Endothelial cell of umbilical vein (primary cell): ENCODE measurements at regions of chr9 and their contacts with region 1.

Region 1: GRCh38 chr9:122931226-122932121 is at the start of gene ZBTB26:
- DNase-seq: peak; percentile 95
- H3K4me3 ChIP-seq: peak within 1 kb of the TSS; percentile 64 to 100 (median 70)
- H3K27ac ChIP-seq: peak within 1 kb of the TSS; percentile 87
- H3K4me1 ChIP-seq: peaks cover 15% of the 10 kb centered on the region
- H3K27me3 ChIP-seq: no peaks in the 10 kb centered on the region
- CTCF ChIP-seq: no peak
- POLR2A ChIP-seq: peak; percentile 90
- total RNA-seq, gene ZBTB26: 4.8 and 5.0 TPM in 2 replicates

Region 2: DNA sequence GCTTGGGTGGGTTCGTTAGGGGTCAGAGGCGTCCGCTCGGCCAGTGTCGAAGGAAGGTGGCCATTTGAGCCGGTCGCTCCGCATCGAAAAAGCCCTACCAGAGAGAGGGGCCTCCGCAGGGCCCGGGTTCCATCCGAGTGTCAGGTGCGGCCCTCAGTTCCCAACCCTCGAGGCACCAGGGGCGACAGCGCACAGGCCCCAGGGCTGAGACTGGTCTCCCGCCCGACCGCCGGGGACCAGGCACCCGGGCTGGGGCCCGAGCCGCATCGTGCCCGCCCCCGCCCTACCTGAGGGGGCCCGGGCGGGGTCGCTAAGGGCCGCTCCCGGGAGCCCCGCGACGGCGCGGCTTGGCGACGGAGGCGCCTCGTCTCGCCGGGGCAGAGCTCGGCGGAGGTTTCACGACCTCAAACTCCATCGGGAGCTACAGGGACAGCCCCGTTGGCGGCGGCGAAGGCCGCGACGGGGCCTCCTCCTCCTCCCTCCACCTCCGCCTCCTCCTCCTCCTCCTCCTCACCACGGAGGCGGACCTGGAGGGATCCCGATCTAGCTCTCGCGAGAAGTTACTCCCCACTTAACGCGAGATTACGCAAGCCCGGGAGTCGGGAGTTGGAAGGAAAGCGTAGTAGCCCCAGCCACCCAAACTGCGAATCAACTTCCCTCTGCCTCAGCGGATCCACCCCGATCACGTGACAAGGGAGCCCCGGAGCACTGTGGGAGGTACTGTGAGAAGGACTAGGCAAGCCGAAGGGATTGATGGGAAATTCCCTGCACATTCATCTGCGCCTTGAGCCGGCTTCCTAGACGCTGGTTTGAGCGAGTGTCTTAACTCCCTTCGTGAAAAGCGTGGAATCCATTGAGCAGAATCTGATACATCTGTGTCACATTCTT is 26.4 kb before region 1 on chr9 and contains the start of gene RC3H2:
- CTCF ChIA-PET with region 1: interaction called, 12 read pairs
- POLR2A ChIA-PET with region 1: interaction called, 6 read pairs
- dilution Hi-C with region 1: no loop called
- intact Hi-C with region 1: loop called (anchors 1 kb)
- DNase-seq: peak; percentile 100
- H3K4me3 ChIP-seq: peak within 1 kb of the TSS; percentile 53 to 92 (median 54)
- H3K27ac ChIP-seq: peak within 1 kb of the TSS; percentile 73
- H3K4me1 ChIP-seq: peaks cover 21% of the 10 kb centered on the region
- H3K27me3 ChIP-seq: no peaks in the 10 kb centered on the region
- CTCF ChIP-seq: no peak
- POLR2A ChIP-seq: peak; percentile 88
- total RNA-seq, gene RC3H2: 57.3 and 63.0 TPM in 2 replicates

Region 3: DNA sequence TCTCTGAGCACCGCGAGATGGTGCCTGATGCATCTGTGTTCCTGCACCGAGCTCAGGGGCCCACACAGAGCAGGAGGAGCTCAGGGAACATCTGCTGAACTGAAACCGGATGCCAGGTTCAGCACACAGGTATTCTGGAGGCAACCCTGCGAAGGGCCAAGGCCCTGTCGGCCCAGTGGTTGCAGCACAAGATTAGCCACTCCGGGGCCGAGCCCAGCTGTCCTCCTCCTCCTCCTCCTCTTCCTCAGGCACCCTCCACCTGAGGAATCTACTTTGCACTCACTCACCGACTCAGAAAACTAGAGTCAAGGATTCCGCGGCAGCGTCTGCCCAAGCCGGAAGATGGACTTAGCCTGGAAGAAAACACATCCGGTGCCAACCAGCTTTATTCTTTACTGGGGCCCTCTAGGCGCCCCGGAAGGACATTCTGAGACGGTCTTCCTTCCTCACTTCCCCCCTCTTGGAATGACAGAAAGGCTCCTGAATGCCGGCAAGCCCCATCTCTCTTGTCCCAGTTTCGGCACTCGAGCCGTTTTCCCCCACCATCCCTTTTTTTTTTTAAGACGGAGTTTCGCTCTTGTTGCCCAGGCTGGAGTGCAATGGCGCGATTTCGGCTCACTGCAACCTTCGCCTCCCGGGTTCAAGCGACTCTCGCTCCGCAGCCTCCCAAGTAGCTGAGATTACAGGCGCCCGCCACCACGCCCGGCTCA is 18.4 kb before region 1 on chr9 and contains the start of gene ZBTB6:
- CTCF ChIA-PET with region 1: interaction called, 7 read pairs
- POLR2A ChIA-PET with region 1: interaction called, 8 read pairs
- dilution Hi-C with region 1: no loop called
- intact Hi-C with region 1: loop called (anchors 1 kb)
- DNase-seq: peak; percentile 77
- H3K4me3 ChIP-seq: peak within 1 kb of the TSS; percentile 78 to 99 (median 93)
- H3K27ac ChIP-seq: peak within 1 kb of the TSS; percentile 60
- H3K4me1 ChIP-seq: peaks cover 12% of the 10 kb centered on the region
- H3K27me3 ChIP-seq: no peaks in the 10 kb centered on the region
- CTCF ChIP-seq: no peak
- POLR2A ChIP-seq: peak; percentile 64
- total RNA-seq, gene ZBTB6: 5.5 and 6.5 TPM in 2 replicates